Aorta (tissue), 5 donors: ENCODE measurements at regions of chr13 and their contacts with region 1.

Region 1: GRCh38 chr13:48303359-48304142 is at the start of gene RB1:
- DNase-seq: peak; percentile 95 to 98
- ATAC-seq: peak; percentile 97
- H3K4me3 ChIP-seq: peak within 1 kb of the TSS; percentile 79 to 98
- H3K27ac ChIP-seq: peak within 1 kb of the TSS; percentile 91 to 98
- H3K4me1 ChIP-seq: peaks cover 0 to 2% of the 10 kb centered on the region in 2 donors
- H3K27me3 ChIP-seq: no peaks in the 10 kb centered on the region
- total RNA-seq, gene RB1: 38.7 to 45.8 TPM

Region 2: DNA sequence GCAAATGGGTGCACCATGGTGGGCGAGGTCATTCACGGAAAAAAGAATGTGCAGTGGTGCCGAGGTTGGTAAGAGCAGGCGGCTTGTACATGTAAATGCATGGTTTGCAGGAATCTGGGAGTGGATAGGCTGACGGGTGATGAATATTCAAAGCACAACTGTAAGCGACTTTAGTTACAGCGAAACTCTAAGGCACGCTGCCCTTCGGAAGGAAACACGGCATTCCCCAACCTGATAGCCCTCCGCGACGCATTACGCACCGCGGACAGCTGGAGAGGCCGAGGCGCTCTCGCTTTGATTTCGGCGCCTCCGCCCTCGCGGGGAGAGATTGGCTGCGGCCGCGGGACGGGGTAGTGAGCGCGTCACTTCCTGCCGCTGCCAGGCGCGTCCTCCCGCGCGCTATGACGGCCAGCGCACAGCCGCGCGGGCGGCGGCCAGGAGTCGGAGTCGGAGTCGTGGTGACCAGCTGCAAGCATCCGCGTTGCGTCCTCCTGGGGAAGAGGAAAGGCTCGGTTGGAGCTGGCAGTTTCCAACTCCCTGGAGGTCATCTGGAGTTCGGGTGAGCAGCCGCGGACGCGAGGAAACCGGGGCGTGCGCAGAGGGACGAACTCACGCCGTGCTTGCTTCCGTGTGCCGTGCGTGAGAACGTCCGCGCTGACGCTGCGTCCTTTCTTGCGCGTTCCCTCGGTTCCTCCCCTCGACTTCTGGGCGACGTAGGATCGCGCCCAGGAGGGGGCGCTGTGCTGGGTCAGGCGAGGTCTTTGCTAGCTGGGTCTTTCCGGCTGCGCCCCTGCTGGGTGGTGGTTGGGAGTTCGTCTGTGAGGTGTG is 266.0 kb before region 1 on chr13 and contains the start of gene NUDT15:
- intact Hi-C with region 1: loop called in 1 of 2 experiments (anchors 5 kb)
- DNase-seq: peak; percentile 97 to 98
- ATAC-seq: peak; percentile 100
- H3K4me3 ChIP-seq: peak within 1 kb of the TSS; percentile 70 to 91
- H3K27ac ChIP-seq: peak within 1 kb of the TSS; percentile 63 to 95
- H3K4me1 ChIP-seq: no peaks in the 10 kb centered on the region
- H3K27me3 ChIP-seq: no peaks in the 10 kb centered on the region
- total RNA-seq, gene NUDT15: 5.7 to 6.6 TPM

Region 3: GRCh38 chr13:48094781-48095502 is 208.6 kb before region 1 on chr13 and contains the start of gene MED4:
- intact Hi-C with region 1: loop called in 1 of 2 experiments (anchors 10 kb)
- DNase-seq: peak; percentile 96 to 99
- ATAC-seq: peak; percentile 98
- H3K4me3 ChIP-seq: peak within 1 kb of the TSS; percentile 75 to 95
- H3K27ac ChIP-seq: peak within 1 kb of the TSS; percentile 30 to 38
- H3K4me1 ChIP-seq: no peaks in the 10 kb centered on the region
- H3K27me3 ChIP-seq: no peaks in the 10 kb centered on the region
- total RNA-seq, gene MED4: 46.1 to 46.9 TPM

Region 4: DNA sequence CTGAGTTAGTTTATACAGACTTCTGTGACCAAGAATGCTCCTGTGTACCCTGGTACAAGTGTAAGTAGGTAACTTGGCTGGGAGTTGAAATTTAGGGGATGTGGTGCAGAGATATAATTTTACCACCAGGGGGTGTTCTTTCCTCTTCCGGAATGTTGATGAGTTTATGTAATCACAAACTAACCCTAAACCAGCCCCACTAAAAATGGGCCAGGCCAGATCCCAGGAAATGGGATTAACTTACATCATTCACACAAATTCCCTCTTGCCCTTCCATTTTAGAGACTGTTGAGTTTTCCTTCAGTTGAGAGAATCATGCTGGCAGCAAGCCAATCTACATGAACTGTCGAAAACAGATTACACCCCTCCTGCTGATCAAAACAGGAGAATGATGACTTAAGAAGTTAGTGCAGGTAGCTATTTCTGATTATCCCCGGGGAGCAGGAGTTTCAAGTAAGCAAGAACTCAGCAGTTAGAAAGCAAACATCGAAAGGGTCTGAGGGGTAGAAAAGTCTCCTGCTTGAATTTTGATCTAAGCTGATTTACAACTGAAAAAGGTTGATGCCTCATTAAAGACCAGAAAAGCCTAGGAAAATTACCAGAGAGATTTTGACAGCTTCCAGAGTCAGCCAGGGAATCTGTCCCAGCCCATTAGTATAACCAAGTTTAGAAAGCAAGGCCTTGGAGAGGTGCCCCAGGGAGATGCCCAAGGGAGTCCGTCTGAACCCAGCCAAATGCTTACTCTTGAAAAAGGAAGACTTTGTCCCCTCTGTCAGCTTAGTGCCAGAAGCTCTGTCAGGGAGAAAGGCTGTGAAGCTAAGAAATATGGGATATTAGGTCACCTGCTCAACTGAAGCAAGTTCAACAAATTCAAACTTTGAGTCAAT is 176.4 kb before region 1 on chr13:
- intact Hi-C with region 1: loop called (anchors 5 to 10 kb)
- DNase-seq: peak; percentile 74 to 81
- ATAC-seq: peak; percentile 91
- H3K4me3 ChIP-seq: no peak overlapping the region
- H3K27ac ChIP-seq: peak overlapping the region; percentile 90 to 97
- H3K4me1 ChIP-seq: peaks cover 3 to 5% of the 10 kb centered on the region in 2 donors
- H3K27me3 ChIP-seq: no peaks in the 10 kb centered on the region

Region 5: DNA sequence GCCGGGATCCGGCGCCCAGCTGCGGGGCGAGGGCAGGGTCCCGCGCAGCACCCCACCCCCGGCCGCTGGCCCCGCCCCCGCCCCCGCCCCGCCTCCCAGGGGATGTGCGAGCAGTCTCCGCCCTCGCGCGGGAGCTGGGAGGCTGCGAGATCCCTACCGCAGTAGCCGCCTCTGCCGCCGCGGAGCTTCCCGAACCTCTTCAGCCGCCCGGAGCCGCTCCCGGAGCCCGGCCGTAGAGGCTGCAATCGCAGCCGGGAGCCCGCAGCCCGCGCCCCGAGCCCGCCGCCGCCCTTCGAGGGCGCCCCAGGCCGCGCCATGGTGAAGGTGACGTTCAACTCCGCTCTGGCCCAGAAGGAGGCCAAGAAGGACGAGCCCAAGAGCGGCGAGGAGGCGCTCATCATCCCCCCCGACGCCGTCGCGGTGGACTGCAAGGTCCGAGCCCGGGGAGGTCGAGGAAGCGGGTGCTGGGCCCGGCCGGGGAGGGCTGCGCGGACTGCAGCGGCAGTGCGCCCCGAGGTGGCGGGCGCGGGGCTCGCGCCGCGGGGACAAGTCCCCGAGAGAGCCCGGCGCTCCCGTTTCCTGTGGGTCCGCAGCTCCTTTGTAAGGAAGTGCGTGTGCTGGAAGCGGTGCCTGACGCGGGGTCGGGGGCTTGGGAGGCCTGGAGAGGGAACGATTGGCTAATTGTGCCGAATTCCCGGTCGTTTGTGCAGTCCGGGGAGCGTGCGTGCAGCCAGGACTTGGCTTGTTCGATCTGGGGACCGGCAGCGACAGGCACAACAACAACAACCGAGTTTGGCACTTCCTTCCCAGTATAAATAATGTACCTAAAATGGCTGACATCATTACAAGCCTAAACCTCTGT is 70.3 kb before region 1 on chr13 and contains the start of gene ITM2B:
- intact Hi-C with region 1: loop called in 1 of 2 experiments (anchors 10 kb)
- DNase-seq: peak; percentile 88 to 92
- ATAC-seq: peak; percentile 92
- H3K4me3 ChIP-seq: peak within 1 kb of the TSS; percentile 65 to 89
- H3K27ac ChIP-seq: peak within 1 kb of the TSS; percentile 90 to 98
- H3K4me1 ChIP-seq: peaks cover 0 to 12% of the 10 kb centered on the region in 2 donors
- H3K27me3 ChIP-seq: no peaks in the 10 kb centered on the region
- total RNA-seq, gene ITM2B: 549 to 771 TPM

Region 6: GRCh38 chr13:48873587-48873986 is 570.0 kb after region 1 on chr13:
- intact Hi-C with region 1: no loop called
- DNase-seq: no peak
- ATAC-seq: no peak
- H3K4me3 ChIP-seq: no peak overlapping the region
- H3K27ac ChIP-seq: no peak overlapping the region
- H3K4me1 ChIP-seq: no peaks in the 10 kb centered on the region
- H3K27me3 ChIP-seq: no peaks in the 10 kb centered on the region